Breast epithelium (tissue), 4 donors: ENCODE measurements at regions of chr5 and their contacts with region 1.

Region 1: DNA sequence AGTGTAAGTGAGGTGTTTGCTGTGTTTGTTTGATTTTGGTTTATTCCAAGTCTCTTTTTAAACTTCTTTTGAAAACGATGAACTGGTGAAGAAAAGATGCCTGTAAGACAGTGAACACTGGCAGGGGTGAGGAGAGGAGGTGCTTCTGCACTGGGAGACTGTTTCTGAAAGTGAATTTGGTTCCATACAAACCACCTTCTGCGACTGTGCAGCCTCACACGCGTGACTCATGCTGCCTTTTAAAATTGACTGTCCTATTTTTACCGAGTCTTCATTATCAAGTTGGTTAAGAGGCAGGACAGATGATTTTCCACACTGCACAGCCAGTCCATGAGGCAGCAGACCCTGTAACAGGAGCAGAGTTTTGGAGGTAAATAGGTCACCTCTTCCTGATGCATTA is 340.6 kb downstream of the MTRR start:
- DNase-seq: no peak
- H3K4me3 ChIP-seq: no peak overlapping the region
- H3K27ac ChIP-seq: no peak overlapping the region
- H3K4me1 ChIP-seq: no peaks in the 10 kb centered on the region
- H3K27me3 ChIP-seq: no peaks in the 10 kb centered on the region
- CTCF ChIP-seq: no peak
- POLR2A ChIP-seq: no peak

Region 2: GRCh38 chr5:8184455-8185063 is 24.9 kb before region 1 on chr5:
- intact Hi-C with region 1: no loop called
- DNase-seq: no peak
- H3K4me3 ChIP-seq: no peak overlapping the region
- H3K27ac ChIP-seq: no peak overlapping the region
- H3K4me1 ChIP-seq: no peaks in the 10 kb centered on the region
- H3K27me3 ChIP-seq: no peaks in the 10 kb centered on the region
- CTCF ChIP-seq: peak in 1 of 3 donors; percentile 25
- POLR2A ChIP-seq: no peak

Region 3: DNA sequence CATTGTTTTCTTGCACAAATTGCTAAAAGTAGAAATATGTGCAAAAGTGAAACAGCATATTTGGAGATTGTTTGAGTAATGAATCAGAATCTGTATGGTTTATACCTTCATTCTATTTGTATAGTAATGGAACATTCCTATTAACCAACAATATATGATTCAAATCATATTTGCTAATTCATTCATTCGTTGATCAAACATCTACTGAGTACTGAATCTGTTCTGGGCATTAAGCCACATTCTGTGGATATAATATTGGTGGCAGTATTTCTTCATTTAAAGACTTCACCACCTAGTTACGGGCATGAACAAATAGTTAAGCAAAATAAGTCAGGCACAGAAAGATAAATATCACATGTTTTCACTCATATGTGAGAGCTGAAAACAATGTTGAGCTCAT is 45.2 kb after region 1 on chr5:
- intact Hi-C with region 1: loop called (anchors 2 kb)
- DNase-seq: no peak
- H3K4me3 ChIP-seq: no peak overlapping the region
- H3K27ac ChIP-seq: no peak overlapping the region
- H3K4me1 ChIP-seq: no peaks in the 10 kb centered on the region
- H3K27me3 ChIP-seq: no peaks in the 10 kb centered on the region
- CTCF ChIP-seq: no peak
- POLR2A ChIP-seq: no peak